Heart left ventricle (tissue), 16 donors: ENCODE measurements at regions of chr1 and their contacts with region 1.

Region 1: DNA sequence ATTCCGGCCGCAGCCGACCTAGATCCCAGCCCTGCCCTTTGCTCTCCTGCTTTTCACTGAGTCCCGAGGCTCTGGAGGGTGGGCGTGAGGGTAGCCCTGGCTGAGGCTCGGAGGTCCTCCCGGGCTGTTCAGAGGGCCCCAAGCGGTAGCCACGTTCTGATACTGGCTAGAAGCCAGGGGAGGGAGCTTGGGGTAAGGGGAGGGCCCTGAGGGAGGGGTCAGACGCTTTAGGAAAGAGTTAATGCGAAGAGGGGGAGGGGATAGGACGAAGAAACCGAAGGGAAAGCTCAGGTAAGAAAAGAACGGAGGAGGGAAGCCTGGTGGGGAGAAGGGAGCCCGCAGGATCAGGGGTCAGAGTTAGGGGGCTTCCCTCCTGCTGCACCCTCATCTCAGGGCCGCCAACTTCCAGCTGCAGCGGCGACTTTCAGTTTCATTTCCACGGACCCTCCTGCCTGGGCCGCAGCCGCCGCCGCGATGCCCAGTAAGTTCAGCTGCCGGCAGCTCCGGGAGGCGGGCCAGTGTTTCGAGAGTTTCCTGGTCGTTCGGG is at the start of gene MOV10:
- DNase-seq: peak; percentile 63 to 89 (median 77)
- ATAC-seq: peak; percentile 58 to 80 (median 70)
- H3K4me3 ChIP-seq: peak within 1 kb of the TSS; percentile 64 to 97 (median 84)
- H3K27ac ChIP-seq: peak within 1 kb of the TSS; percentile 81 to 96 (median 92)
- H3K4me1 ChIP-seq: peaks cover 0 to 39% (median 24%) of the 10 kb centered on the region in 12 donors
- H3K27me3 ChIP-seq: no peaks in the 10 kb centered on the region
- CTCF ChIP-seq: no peak
- POLR2A ChIP-seq: peak in 1 of 2 donors; percentile 22
- total RNA-seq, gene MOV10: 7.5 to 43.6 (median 13.3) TPM

Region 2: GRCh38 chr1:112501810-112502641 is 172.5 kb before region 1 on chr1:
- intact Hi-C with region 1: loop called in 2 of 10 experiments (anchors 10 kb)
- DNase-seq: peak; percentile 60 to 85 (median 78)
- ATAC-seq: peak; percentile 72 to 88 (median 86)
- H3K4me3 ChIP-seq: peak overlapping the region; percentile 14 to 67 (median 60)
- H3K27ac ChIP-seq: peak overlapping the region in 9 of 12 donors; percentile 52 to 78 (median 72)
- H3K4me1 ChIP-seq: peaks cover 0 to 23% (median 11%) of the 10 kb centered on the region in 12 donors
- H3K27me3 ChIP-seq: peaks cover 0 to 41% (median 0%) of the 10 kb centered on the region in 9 donors
- CTCF ChIP-seq: peak; percentile 49 to 85 (median 68)
- POLR2A ChIP-seq: no peak

Region 3: DNA sequence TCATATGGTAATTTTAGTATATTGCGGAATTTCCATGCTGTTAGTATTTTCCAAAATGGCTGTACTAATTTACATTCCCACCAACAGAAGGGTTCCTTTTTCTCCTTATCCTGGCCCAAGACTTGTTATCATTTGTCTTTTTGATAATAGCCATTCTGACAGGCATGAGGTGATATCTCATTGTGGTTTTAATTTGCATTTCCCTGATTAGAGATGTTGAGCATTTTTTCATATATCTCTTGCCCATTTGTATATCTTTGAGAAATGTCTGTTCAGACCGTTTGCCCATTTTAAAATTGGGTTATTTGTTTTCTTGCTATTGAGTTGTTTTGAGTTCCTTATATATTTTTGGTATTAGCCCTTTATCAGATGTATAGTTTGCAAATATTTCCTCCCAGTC is 40.9 kb before region 1 on chr1:
- intact Hi-C with region 1: loop called in 2 of 10 experiments (anchors 5 to 10 kb)
- DNase-seq: no peak
- ATAC-seq: no peak
- H3K4me3 ChIP-seq: no peak overlapping the region
- H3K27ac ChIP-seq: no peak overlapping the region
- H3K4me1 ChIP-seq: peaks cover 5 to 94% (median 29%) of the 10 kb centered on the region in 12 donors
- H3K27me3 ChIP-seq: no peaks in the 10 kb centered on the region
- CTCF ChIP-seq: no peak
- POLR2A ChIP-seq: no peak

Region 4: DNA sequence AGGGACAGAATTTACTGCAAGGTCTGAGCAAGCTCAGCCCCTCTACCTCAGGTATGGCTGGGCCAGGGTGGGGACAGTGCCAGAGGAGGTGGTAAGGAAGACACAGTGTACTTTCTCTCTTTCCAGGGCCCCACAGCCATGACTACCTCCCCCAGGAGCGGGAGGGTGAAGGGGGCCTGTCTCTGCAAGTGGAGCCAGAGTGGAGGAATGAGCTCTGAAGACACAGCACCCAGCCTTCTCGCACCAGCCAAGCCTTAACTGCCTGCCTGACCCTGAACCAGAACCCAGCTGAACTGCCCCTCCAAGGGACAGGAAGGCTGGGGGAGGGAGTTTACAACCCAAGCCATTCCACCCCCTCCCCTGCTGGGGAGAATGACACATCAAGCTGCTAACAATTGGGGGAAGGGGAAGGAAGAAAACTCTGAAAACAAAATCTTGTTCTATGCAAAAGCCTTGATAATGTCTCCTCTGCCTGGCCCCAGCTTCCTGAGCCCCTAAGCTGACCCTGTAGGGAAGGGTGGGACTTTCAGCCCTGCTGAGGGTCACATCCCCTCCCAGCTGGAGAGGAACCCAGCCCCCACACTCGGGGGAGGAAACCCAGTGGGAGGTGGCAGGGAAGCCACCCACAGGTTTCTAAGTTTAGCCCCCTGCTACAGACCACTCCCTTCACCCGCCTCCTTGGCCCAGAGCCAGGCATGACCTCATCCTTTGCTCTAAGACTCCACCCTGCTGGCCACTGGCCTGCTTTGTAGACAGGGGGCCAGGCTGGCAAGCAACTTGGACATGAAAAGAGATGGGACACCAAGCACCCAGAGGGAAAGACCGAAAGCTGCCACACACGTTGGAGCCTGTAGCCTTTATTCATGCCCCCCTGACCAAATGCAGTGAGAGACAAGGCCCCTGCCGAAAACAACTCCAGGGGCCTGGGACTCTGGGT is 26.0 kb after region 1 on chr1:
- intact Hi-C with region 1: loop called in 4 of 10 experiments (anchors 2 to 5 kb)
- DNase-seq: peak; percentile 98 to 99 (median 99)
- ATAC-seq: peak; percentile 74 to 84 (median 79)
- H3K4me3 ChIP-seq: peak overlapping the region in 5 of 12 donors; percentile 1 to 28 (median 5)
- H3K27ac ChIP-seq: peak overlapping the region; percentile 67 to 100 (median 96)
- H3K4me1 ChIP-seq: peaks cover 17 to 88% (median 74%) of the 10 kb centered on the region in 12 donors
- H3K27me3 ChIP-seq: no peaks in the 10 kb centered on the region
- CTCF ChIP-seq: peak in 6 of 12 donors; percentile 15 to 45 (median 26)
- POLR2A ChIP-seq: peak in 1 of 2 donors; percentile 20

Region 5: GRCh38 chr1:112715264-112716053 is 40.9 kb after region 1 on chr1 and contains the start of gene PPM1J:
- intact Hi-C with region 1: loop called in 1 of 10 experiments (anchors 2 kb)
- DNase-seq: peak; percentile 98 to 99 (median 99)
- ATAC-seq: peak; percentile 86 to 93 (median 88)
- H3K4me3 ChIP-seq: peak within 1 kb of the TSS; percentile 40 to 93 (median 70)
- H3K27ac ChIP-seq: peak within 1 kb of the TSS in 11 of 12 donors; percentile 31 to 83 (median 71)
- H3K4me1 ChIP-seq: peaks cover 0 to 35% (median 20%) of the 10 kb centered on the region in 12 donors
- H3K27me3 ChIP-seq: peaks cover 0 to 12% (median 0%) of the 10 kb centered on the region in 9 donors
- CTCF ChIP-seq: no peak
- POLR2A ChIP-seq: peak in 1 of 2 donors; percentile 81
- total RNA-seq, gene PPM1J: 4.2 to 11.5 (median 8.3) TPM